ENCODE measurements at regions of chr17 and their contacts with region 1.

Region 1: DNA sequence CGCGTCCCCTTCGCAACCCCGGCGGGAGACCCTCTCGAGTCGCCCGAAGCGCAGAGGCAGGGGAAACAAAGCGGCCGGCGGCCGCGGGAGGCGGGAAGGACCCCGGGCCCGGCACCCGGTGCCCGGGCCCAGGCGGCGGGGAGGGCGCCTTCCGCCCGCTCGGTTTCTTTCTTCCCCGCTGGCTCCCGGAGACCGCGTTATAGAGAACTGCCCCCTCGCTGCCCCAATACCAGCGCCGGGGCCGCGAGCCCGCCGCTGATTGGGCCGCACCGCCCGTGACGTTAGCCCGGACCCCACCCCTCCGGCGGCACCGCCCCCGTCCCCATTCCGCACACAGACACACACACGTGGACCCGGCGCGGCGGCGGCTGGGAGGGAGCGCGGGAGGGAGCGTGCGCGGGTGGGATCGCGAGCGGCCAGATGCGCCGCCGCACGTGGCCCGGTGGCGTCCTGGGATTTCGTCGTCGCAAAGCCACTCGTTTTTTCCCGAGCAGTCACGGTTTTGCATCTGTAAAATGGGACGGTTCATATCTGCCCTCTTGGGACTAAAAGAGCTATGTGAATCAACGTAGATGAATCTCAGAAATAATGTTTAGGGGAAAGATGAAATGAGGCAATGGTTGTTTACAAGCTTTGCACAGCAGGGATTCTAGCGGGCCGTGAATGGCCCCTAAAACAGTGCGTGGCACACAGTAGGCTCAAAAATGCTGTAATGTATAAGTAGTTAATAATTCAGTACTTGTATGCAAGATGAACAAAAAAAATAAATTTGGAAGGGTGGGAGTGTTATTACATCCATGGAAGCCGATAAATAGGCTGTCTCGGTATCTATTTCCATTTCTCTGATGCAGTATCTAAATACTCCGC is at the start of gene EPOP:
- DNase-seq: peak in 1 of 2 experiments; percentile 91
- H3K4me3 ChIP-seq: peak within 1 kb of the TSS; percentile 45 to 71 (median 48)
- H3K27ac ChIP-seq: no peak within 1 kb of the TSS
- H3K4me1 ChIP-seq: peaks cover 4 to 33% (median 17%) of the 10 kb centered on the region in 4 experiments
- H3K27me3 ChIP-seq: peaks cover 33 to 69% (median 65%) of the 10 kb centered on the region in 4 experiments
- CTCF ChIP-seq: no peak
- EP300 ChIP-seq: no peak
- POLR2A ChIP-seq: no peak
- RAD21 ChIP-seq: no peak
- total RNA-seq, gene EPOP: 3.3 and 4.0 TPM in 2 replicates

Region 2: GRCh38 chr17:38557836-38558727 is 116.9 kb before region 1 on chr17:
- CTCF ChIA-PET with region 1: interaction called, 366 read pairs
- POLR2A ChIA-PET with region 1: interaction called, 18 read pairs
- DNase-seq: peak; percentile 93 to 97
- H3K4me3 ChIP-seq: peak overlapping the region; percentile 37 to 69 (median 58); a peak in 7 of 8 replicates
- H3K27ac ChIP-seq: no peak overlapping the region
- H3K4me1 ChIP-seq: peaks cover 4 to 37% (median 27%) of the 10 kb centered on the region in 4 experiments
- H3K27me3 ChIP-seq: peaks cover 34 to 52% (median 48%) of the 10 kb centered on the region in 4 experiments
- CTCF ChIP-seq: peak; percentile 95 to 97 (median 96)
- EP300 ChIP-seq: 0 out of 3 replicates have a peak, but pooled peaks of 1 of the 2 experiments have one; percentile 58
- POLR2A ChIP-seq: no peak
- RAD21 ChIP-seq: peak; percentile 75 to 85

Region 3: GRCh38 chr17:38605888-38606645 is 68.9 kb before region 1 on chr17 and contains the start of gene SRCIN1:
- CTCF ChIA-PET with region 1: interaction called, 795 read pairs
- POLR2A ChIA-PET with region 1: interaction called, 17 read pairs
- DNase-seq: peak in 1 of 2 experiments; percentile 95
- H3K4me3 ChIP-seq: peak within 1 kb of the TSS; percentile 48 to 67 (median 56)
- H3K27ac ChIP-seq: peak within 1 kb of the TSS; percentile 30; the same call in 1 of the 2 replicates
- H3K4me1 ChIP-seq: peaks cover 34 to 59% (median 51%) of the 10 kb centered on the region in 4 experiments
- H3K27me3 ChIP-seq: peaks cover 2 to 29% (median 25%) of the 10 kb centered on the region in 4 experiments
- CTCF ChIP-seq: peak; percentile 94 to 100 (median 98)
- EP300 ChIP-seq: no peak
- POLR2A ChIP-seq: peak in 1 of 2 experiments; percentile 29; a peak in 1 of 3 replicates
- RAD21 ChIP-seq: peak; percentile 41 to 71
- total RNA-seq, gene SRCIN1: 3.8 and 4.1 TPM in 2 replicates

Region 4: DNA sequence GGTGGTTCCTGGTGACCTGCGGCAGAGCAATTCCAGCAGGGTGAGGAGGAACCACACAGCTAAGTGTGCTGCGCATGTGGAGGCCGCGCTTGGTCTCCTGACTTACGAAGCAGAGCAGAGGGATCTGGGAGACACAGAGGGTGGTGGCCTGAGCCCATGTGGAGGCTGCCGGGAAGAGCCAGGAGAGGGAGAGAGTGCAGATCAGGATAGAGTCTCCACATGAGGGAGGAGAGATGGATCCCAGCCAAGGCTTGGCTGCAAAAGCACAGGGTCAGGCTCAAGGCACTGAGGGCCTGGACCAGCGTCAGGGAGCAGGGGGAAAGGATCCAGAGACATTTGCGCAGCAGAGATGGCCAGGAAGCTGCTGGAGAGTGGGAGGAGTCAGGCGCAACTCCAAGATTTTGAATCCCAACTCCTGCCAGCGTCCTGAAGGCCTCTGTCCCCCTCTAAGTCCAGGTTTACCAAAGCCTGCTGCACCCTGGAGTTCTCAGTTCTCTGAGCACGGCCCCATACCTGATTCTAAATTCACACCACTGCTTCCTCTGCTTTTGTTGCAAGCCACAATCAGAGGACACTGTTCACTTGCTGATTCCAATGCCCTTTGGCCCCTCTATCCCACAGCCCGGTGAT is 18.8 kb after region 1 on chr17:
- CTCF ChIA-PET with region 1: interaction called, 141 read pairs
- POLR2A ChIA-PET with region 1: interaction called, 5 read pairs
- DNase-seq: no peak
- H3K4me3 ChIP-seq: no peak overlapping the region
- H3K27ac ChIP-seq: no peak overlapping the region
- H3K4me1 ChIP-seq: no peaks in the 10 kb centered on the region
- H3K27me3 ChIP-seq: peaks cover 0 to 22% (median 20%) of the 10 kb centered on the region in 4 experiments; a peak in 6 of 7 replicates
- CTCF ChIP-seq: no peak
- EP300 ChIP-seq: no peak
- POLR2A ChIP-seq: no peak
- RAD21 ChIP-seq: no peak

Region 5: GRCh38 chr17:38704645-38705522 is 29.9 kb after region 1 on chr17 and contains the start of gene MLLT6:
- CTCF ChIA-PET with region 1: interaction called, 17 read pairs
- POLR2A ChIA-PET with region 1: interaction called, 5 read pairs
- DNase-seq: no peak
- H3K4me3 ChIP-seq: peak within 1 kb of the TSS; percentile 46 to 76 (median 60)
- H3K27ac ChIP-seq: no peak within 1 kb of the TSS
- H3K4me1 ChIP-seq: peaks cover 15 to 48% (median 32%) of the 10 kb centered on the region in 4 experiments
- H3K27me3 ChIP-seq: peaks cover 31 to 80% (median 65%) of the 10 kb centered on the region in 4 experiments
- CTCF ChIP-seq: no peak
- EP300 ChIP-seq: no peak
- POLR2A ChIP-seq: no peak
- RAD21 ChIP-seq: no peak; a peak in 1 of 4 replicates
- total RNA-seq, gene MLLT6: 7.7 and 8.0 TPM in 2 replicates

Region 6: DNA sequence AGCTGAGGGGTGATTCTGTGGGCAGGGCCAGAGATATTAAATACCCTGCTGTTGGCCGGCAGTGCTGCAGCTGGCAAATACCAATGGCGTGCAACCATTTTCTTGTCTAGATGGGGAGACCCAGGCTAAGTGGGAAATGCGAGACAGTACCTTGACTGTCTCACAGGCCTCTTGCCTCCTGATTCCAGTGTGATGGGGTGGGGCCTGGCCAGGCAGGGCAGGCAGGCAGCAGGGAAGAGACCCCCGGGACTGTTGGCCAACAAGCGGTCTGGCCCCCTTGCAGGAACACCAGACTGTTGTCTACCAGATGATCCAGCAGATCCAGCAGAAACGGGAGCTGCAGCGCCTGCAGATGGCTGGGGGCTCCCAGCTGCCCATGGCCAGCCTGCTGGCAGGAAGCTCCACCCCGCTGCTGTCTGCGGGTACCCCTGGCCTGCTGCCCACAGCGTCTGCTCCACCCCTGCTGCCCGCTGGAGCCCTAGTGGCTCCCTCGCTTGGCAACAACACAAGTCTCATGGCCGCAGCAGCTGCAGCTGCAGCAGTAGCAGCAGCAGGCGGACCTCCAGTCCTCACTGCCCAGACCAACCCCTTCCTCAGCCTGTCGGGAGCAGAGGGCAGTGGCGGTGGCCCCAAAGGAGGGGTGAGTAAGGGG is 49.5 kb after region 1 on chr17:
- CTCF ChIA-PET with region 1: interaction called, 17 read pairs
- POLR2A ChIA-PET with region 1: interaction called, 3 read pairs
- DNase-seq: no peak
- H3K4me3 ChIP-seq: no peak overlapping the region
- H3K27ac ChIP-seq: no peak overlapping the region
- H3K4me1 ChIP-seq: peaks cover 3 to 10% (median 6%) of the 10 kb centered on the region in 4 experiments
- H3K27me3 ChIP-seq: peaks cover 0 to 26% (median 13%) of the 10 kb centered on the region in 4 experiments; a peak in 6 of 7 replicates
- CTCF ChIP-seq: no peak
- EP300 ChIP-seq: no peak
- POLR2A ChIP-seq: no peak
- RAD21 ChIP-seq: no peak

Region 7: GRCh38 chr17:38735161-38735997 is 60.4 kb after region 1 on chr17:
- CTCF ChIA-PET with region 1: interaction called, 44 read pairs
- POLR2A ChIA-PET with region 1: interaction called, 4 read pairs
- DNase-seq: peak in 1 of 2 experiments; percentile 93
- H3K4me3 ChIP-seq: no peak overlapping the region
- H3K27ac ChIP-seq: no peak overlapping the region
- H3K4me1 ChIP-seq: peaks cover 0 to 12% (median 6%) of the 10 kb centered on the region in 4 experiments; a peak in 5 of 7 replicates
- H3K27me3 ChIP-seq: no peaks in the 10 kb centered on the region
- CTCF ChIP-seq: peak; percentile 85 to 99 (median 93)
- EP300 ChIP-seq: no peak
- POLR2A ChIP-seq: no peak
- RAD21 ChIP-seq: peak; percentile 87 to 89